ENCODE measurements at regions of chr10 and their contacts with region 1.

Region 1: DNA sequence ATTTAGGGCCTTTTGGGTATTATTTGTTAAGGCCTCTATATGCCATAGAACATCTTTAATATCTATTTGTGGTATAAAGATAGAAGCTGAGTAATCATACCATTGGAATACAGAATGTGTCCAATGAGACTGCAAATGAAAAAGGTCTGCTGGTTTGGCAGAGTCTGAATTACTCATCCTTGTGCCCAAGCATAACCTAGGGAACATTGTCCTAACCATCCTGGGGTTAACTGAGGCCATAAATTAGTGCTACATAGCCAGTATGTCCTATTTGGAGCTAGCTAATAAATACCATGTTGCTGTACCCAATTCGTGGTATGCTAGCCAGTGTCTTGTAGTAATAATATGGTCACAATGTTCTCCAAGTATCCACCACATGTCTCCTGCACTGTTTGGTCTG is 117.1 kb downstream of the ANKRD26 start:
- DNase-seq: no peak
- ATAC-seq: no peak
- H3K4me3 ChIP-seq: no peak overlapping the region
- H3K27ac ChIP-seq: no peak overlapping the region
- H3K4me1 ChIP-seq: no peaks in the 10 kb centered on the region
- H3K27me3 ChIP-seq: no peaks in the 10 kb centered on the region
- CTCF ChIP-seq: no peak

Region 2: DNA sequence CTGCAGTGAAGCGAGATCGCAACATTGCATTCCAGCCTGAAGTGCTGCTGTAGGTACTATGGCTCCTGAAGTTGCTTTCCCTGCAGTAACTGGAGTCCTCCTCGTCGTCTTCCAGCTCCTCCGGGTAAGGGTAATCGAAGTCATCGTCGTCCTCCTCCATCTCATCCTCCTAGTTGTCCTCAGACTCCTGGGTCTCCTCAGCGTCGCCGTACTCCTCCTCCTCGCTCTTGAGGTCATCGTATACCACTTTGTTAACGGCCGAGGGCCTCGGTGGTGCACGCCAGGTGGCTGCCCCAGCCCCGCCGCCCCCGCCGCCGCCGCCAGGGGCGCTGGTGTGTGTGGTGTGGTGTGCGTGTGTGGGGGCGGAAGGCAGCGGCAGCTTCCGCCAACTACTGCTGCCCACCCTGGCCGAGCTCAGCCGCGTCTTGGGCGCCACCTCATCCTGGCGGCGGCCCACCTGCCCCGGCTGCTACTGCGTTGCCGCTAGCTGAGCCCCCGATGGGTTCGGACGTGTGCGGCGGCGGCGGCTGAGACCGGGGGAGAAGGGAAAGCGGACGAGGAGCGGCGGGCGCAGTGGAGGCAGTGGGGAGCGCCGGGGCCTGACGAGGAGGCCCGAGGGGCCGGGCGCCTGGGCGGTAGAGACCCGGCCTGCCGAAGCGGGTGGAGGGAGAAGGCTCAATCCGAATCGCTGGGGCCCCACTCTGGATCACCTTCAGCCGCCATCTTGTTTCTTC is 269.3 kb after region 1 on chr10:
- CTCF ChIA-PET with region 1: no interaction called
- POLR2A ChIA-PET with region 1: no interaction called
- intact Hi-C with region 1: no loop called
- DNase-seq: no peak
- ATAC-seq: no peak
- H3K4me3 ChIP-seq: no peak overlapping the region
- H3K27ac ChIP-seq: no peak overlapping the region
- H3K4me1 ChIP-seq: no peaks in the 10 kb centered on the region
- H3K27me3 ChIP-seq: no peaks in the 10 kb centered on the region
- CTCF ChIP-seq: no peak

Region 3: DNA sequence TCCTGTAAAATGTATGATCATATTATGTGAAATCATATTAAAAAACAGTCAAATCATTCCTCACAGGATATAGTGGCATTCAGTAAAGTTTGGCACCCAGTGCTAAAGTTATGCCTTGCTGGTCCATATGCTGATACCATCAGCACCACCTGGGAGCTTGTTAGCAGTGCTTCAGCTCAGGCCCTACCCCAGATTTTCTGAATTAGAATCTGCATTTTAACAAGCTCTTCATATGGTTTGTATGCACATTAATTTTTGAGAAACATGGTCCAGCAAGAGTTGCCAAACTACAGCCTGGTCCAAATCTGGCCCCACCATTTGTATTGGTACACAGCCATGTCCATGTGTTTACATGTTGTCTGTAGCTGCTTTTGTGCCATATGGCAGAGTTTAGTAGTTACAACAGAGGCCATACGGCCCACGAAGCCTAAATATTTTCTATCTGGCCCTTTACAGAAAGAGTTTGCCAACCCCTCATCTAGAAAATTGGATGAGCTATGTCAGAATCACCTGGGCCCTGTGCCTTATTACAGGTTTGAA is 551.1 kb after region 1 on chr10:
- CTCF ChIA-PET with region 1: no interaction called
- POLR2A ChIA-PET with region 1: interaction called, 15 read pairs
- intact Hi-C with region 1: no loop called
- DNase-seq: no peak
- ATAC-seq: no peak
- H3K4me3 ChIP-seq: no peak overlapping the region
- H3K27ac ChIP-seq: no peak overlapping the region
- H3K4me1 ChIP-seq: no peaks in the 10 kb centered on the region
- H3K27me3 ChIP-seq: no peaks in the 10 kb centered on the region
- CTCF ChIP-seq: no peak